CD8-positive, alpha-beta T cell (primary cell): ENCODE measurements at regions of chr9 and their contacts with region 1.

Region 1: GRCh38 chr9:38149647-38150046 is 80.6 kb upstream of the SHB start:
- DNase-seq: no peak
- ATAC-seq: no peak
- H3K4me3 ChIP-seq: no peak overlapping the region
- H3K4me3 Mint-ChIP-seq: no peak overlapping the region
- H3K27ac ChIP-seq: no peak overlapping the region
- H3K27ac Mint-ChIP-seq: no peak overlapping the region
- H3K4me1 ChIP-seq: no peaks in the 10 kb centered on the region
- H3K4me1 Mint-ChIP-seq: no peaks in the 10 kb centered on the region
- H3K27me3 ChIP-seq: no peaks in the 10 kb centered on the region
- H3K27me3 Mint-ChIP-seq: peaks cover 18% of the 10 kb centered on the region
- CTCF ChIP-seq: no peak

Region 2: GRCh38 chr9:38096238-38096805 is 53.3 kb before region 1 on chr9:
- CTCF ChIA-PET with region 1: no interaction called
- POLR2A ChIA-PET with region 1: no interaction called
- intact Hi-C with region 1: no loop called
- DNase-seq: peak in 1 of 9 experiments; percentile 15
- ATAC-seq: no peak
- H3K4me3 ChIP-seq: no peak overlapping the region
- H3K4me3 Mint-ChIP-seq: no peak overlapping the region
- H3K27ac ChIP-seq: no peak overlapping the region
- H3K27ac Mint-ChIP-seq: no peak overlapping the region
- H3K4me1 ChIP-seq: no peaks in the 10 kb centered on the region
- H3K4me1 Mint-ChIP-seq: no peaks in the 10 kb centered on the region
- H3K27me3 ChIP-seq: no peaks in the 10 kb centered on the region
- H3K27me3 Mint-ChIP-seq: peaks cover 8% of the 10 kb centered on the region
- CTCF ChIP-seq: no peak

Region 3: DNA sequence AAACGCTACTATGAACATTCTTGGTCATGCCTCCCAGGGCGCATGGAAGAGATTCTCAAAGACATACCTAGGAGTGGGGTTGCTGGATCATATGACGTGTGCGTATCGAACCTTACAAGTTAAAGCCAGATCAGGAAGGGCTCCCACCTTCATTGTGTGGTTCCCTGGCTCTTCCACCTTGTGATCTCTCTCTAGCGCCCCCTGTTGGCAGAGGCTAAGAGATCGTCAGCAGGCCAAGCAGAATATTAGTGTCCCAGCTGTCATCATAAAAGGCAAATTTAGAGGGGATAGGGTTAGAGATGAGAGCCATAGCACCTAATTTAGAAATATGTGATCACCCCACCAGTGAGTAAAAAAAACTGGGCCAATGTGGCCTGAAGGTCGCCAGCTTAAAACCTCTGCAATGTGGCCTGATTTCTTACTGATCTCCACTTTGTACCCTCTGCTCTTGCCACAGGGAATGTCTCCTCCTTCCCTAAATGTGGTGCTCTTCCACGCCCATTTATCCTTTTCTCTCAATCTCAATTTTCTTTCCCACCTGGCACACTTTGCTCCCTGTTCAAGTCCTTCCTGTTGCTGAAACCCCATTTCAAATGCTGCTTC is 11.1 kb after region 1 on chr9:
- CTCF ChIA-PET with region 1: interaction called, 14 read pairs
- POLR2A ChIA-PET with region 1: no interaction called
- intact Hi-C with region 1: no loop called
- DNase-seq: peak; percentile 13 to 72 (median 57)
- ATAC-seq: no peak
- H3K4me3 ChIP-seq: no peak overlapping the region
- H3K4me3 Mint-ChIP-seq: no peak overlapping the region
- H3K27ac ChIP-seq: no peak overlapping the region
- H3K27ac Mint-ChIP-seq: no peak overlapping the region
- H3K4me1 ChIP-seq: no peaks in the 10 kb centered on the region
- H3K4me1 Mint-ChIP-seq: peaks cover 6% of the 10 kb centered on the region
- H3K27me3 ChIP-seq: no peaks in the 10 kb centered on the region
- H3K27me3 Mint-ChIP-seq: no peaks in the 10 kb centered on the region
- CTCF ChIP-seq: peak; percentile 74